ENCODE measurements at regions of chrX and their contacts with region 1.

Region 1: GRCh38 chrX:121579016-121579760 is 531.8 kb downstream of the GLUD2 start:
- DNase-seq: no peak
- H3K4me3 ChIP-seq: no peak overlapping the region
- H3K27ac ChIP-seq: no peak overlapping the region
- H3K4me1 ChIP-seq: no peaks in the 10 kb centered on the region
- H3K27me3 ChIP-seq: no peaks in the 10 kb centered on the region
- CTCF ChIP-seq: peak; percentile 56

Region 2: DNA sequence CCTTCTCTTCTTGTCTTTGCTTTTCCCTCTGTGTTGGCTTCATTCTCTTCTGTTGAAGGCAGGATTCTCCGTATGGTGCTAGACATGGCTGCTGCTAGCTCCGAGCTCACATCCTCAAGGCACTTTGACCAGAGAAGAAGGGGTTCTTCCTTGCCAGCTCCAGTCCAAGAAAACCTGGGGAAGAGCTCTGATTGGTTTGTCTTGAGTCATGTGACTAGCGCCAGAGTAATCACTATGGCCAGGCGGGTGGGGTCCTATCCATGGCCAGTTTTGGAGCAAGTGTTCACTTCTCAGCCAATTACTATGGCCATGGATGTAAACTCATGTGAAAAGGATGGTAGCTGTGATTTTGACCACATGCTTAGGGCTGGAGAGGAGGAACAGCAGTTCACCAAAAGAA is 777.8 kb before region 1 on chrX:
- intact Hi-C with region 1: loop called (anchors 10 kb)
- DNase-seq: no peak
- H3K4me3 ChIP-seq: no peak overlapping the region
- H3K27ac ChIP-seq: no peak overlapping the region
- H3K4me1 ChIP-seq: peaks cover 1% of the 10 kb centered on the region
- H3K27me3 ChIP-seq: no peaks in the 10 kb centered on the region
- CTCF ChIP-seq: no peak

Measured in left ventricle myocardium inferior (tissue), 1 donor.